AG04450 (cell line): ENCODE measurements at regions of chr13 and their contacts with region 1.

Region 1: GRCh38 chr13:95644601-95645052 is at the start of gene DZIP1:
- DNase-seq: peak; percentile 64
- H3K4me3 ChIP-seq: peak within 1 kb of the TSS; percentile 65
- H3K27ac ChIP-seq: peak within 1 kb of the TSS; percentile 65
- H3K27me3 ChIP-seq: no peaks in the 10 kb centered on the region
- CTCF ChIP-seq: no peak
- polyA plus RNA-seq, gene DZIP1: 30.5 and 32.9 TPM in 2 replicates

Region 2: DNA sequence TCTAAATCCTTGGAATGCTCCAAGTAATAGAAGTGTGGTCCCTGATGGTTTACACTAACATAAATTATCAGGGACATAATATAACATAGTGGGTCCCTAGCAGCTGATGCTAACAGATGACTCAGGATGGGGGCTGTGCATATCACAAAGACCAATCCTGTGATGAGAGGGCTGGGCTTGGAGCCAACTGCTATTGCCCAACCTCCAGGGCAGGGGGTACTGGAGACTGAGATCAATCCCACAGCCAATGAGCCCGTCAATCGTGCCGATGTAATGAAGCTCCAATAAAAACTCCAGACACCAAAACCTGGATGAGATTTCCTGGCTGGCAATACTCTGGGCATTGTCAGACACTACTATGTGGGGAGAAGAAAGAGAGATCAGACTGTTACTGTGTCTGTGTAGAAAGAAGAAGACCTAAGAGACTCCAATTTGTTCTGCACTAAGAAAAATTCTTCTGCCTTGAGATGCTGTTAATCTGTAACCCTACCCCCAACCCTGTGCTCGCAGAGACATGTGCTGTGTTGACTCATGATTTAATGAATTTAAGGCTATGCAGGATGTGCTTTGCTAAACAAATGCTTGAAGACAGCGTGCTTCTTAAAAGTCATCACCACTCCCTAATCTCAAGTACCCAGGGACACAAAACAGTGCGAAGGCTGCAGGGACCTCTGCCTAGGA is 376.8 kb before region 1 on chr13:
- CTCF ChIA-PET with region 1: no interaction called
- POLR2A ChIA-PET with region 1: no interaction called
- DNase-seq: peak; percentile 94
- H3K4me3 ChIP-seq: no peak overlapping the region
- H3K27ac ChIP-seq: peak overlapping the region; percentile 95
- H3K27me3 ChIP-seq: no peaks in the 10 kb centered on the region
- CTCF ChIP-seq: no peak

Region 3: GRCh38 chr13:95676762-95677563 is 32.3 kb after region 1 on chr13 and contains the start of gene DNAJC3:
- CTCF ChIA-PET with region 1: no interaction called
- POLR2A ChIA-PET with region 1: interaction called, 23 read pairs
- DNase-seq: peak; percentile 92
- H3K4me3 ChIP-seq: peak within 1 kb of the TSS; percentile 88
- H3K27ac ChIP-seq: peak within 1 kb of the TSS; percentile 80
- H3K27me3 ChIP-seq: no peaks in the 10 kb centered on the region
- CTCF ChIP-seq: no peak
- polyA plus RNA-seq, gene DNAJC3: 21.7 and 30.2 TPM in 2 replicates